ENCODE measurements at regions of chr11 and their contacts with region 1.

Region 1: GRCh38 chr11:64348611-64349484 is 8.8 kb downstream of the CCDC88B start:
- DNase-seq: no peak
- H3K4me3 ChIP-seq: no peak overlapping the region
- H3K27ac ChIP-seq: no peak overlapping the region
- H3K4me1 ChIP-seq: peaks cover 8% of the 10 kb centered on the region
- H3K27me3 ChIP-seq: no peaks in the 10 kb centered on the region
- CTCF ChIP-seq: no peak

Region 2: GRCh38 chr11:64152841-64153691 is 195.8 kb before region 1 on chr11:
- CTCF ChIA-PET with region 1: no interaction called
- dilution Hi-C with region 1: no loop called
- in situ Hi-C with region 1: no loop called
- intact Hi-C with region 1: no loop called
- DNase-seq: peak; percentile 29
- H3K4me3 ChIP-seq: peak overlapping the region in 2 of 3 experiments; percentile 7 to 17
- H3K27ac ChIP-seq: no peak overlapping the region
- H3K4me1 ChIP-seq: peaks cover 4% of the 10 kb centered on the region
- H3K27me3 ChIP-seq: no peaks in the 10 kb centered on the region
- CTCF ChIP-seq: peak; percentile 87 to 99

Region 3: DNA sequence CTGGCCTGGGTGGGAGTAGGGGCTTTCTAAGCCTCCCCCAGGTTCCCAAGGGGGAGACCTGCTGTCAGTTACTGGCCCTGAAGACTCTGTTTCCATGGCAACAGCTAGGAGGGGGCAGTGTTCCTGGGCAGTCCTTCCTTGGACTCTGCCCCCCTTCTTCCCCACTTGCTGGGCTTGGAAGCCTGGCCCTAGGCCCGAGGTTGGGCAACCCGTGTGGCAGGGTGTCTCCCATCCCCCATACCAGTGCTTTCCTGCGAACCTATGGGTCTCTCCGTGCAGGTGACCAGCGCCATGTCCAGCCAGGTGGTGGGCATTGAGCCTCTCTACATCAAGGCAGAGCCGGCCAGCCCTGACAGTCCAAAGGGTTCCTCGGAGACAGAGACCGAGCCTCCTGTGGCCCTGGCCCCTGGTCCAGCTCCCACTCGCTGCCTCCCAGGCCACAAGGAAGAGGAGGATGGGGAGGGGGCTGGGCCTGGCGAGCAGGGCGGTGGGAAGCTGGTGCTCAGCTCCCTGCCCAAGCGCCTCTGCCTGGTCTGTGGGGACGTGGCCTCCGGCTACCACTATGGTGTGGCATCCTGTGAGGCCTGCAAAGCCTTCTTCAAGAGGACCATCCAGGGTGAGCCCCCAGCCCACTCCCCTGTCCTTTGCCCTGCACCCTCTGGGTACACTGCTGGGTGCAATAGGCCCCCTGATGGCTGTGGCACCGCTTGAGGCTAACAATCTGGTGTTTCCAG is 41.8 kb before region 1 on chr11:
- CTCF ChIA-PET with region 1: no interaction called
- dilution Hi-C with region 1: no loop called
- in situ Hi-C with region 1: no loop called
- intact Hi-C with region 1: no loop called
- DNase-seq: no peak
- H3K4me3 ChIP-seq: peak overlapping the region; percentile 57 to 71 (median 65)
- H3K27ac ChIP-seq: peak overlapping the region; percentile 14
- H3K4me1 ChIP-seq: peaks cover 34% of the 10 kb centered on the region
- H3K27me3 ChIP-seq: no peaks in the 10 kb centered on the region
- CTCF ChIP-seq: no peak

Region 4: DNA sequence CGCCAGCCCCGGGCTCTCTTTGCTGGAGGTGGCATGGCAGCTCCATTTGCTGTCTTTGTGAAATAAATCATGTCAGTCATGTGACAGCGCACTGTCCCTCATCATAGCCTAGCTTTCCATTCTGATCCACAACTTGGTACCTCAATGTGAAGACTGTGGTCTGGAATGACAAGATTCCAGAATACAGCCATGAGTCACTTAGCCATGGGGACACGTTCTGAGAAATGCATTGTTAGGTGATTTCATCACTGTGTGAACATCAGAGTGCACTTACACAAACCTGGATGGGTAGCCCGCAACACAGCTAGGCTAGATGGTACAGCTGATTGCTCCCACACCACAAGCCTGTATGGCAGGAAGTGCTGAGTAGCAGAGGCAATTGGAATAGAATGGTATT is 37.5 kb after region 1 on chr11:
- CTCF ChIA-PET with region 1: no interaction called
- dilution Hi-C with region 1: loop called (anchors 5 kb)
- in situ Hi-C with region 1: no loop called
- intact Hi-C with region 1: no loop called
- DNase-seq: peak; percentile 83
- H3K4me3 ChIP-seq: no peak overlapping the region
- H3K27ac ChIP-seq: no peak overlapping the region
- H3K4me1 ChIP-seq: peaks cover 15% of the 10 kb centered on the region
- H3K27me3 ChIP-seq: peaks cover 2% of the 10 kb centered on the region
- CTCF ChIP-seq: no peak

Measured in mammary epithelial cell (primary cell).